ENCODE measurements at regions of chrX and their contacts with region 1.

Region 1: DNA sequence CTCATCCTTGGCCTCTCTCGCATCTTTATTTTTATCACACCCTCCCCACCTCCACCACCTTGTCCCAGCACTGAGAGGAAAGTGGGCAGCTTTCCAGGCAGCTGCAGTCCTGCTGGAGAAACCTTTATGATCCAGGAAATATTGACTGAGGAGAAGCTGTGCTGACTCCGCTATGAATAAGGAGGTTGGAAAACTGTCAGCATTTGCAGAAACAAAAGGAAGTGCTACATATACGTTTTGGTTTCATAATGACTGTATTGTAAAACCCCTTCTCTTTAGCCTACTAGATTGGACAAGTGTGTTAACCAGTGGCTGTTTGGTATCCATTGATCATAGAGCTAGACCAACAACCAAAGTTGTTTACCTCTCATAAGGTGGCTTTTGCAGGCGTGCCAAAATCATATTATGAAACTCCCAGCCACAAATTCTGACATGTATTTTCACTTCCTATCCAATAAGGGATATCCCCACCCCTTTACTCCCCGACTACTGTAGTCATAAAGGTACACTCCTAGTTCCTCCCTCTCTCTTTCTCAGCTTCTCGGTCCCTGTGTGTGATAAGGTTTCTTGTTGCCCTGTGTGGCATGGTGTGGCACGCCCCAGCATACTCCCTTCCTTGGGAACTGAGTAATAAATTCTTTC is 88.4 kb downstream of the GPR143 start:
- DNase-seq: peak; percentile 73
- CTCF ChIP-seq: no peak

Region 2: DNA sequence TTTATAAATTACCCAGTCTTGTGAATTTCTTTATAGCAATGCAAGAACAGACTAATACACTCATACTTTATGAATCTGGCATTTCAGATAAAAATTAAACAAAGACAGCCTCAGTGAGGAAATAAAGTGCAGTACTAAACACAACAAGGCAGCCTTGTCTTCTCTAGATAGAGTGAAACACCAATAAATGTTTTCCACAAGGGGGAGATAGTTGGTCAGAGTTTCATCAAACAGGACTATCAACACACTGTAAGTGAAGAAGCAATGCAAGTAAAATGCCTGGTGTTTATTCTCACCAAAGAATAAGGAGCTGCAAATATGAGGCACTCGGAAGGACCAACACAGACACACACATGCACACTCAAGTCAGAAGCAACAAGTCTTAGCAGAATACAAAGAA is 706.1 kb before region 1 on chrX:
- in situ Hi-C with region 1: loop called (anchors 25 kb)
- DNase-seq: peak; percentile 9
- CTCF ChIP-seq: peak; percentile 23

Region 3: DNA sequence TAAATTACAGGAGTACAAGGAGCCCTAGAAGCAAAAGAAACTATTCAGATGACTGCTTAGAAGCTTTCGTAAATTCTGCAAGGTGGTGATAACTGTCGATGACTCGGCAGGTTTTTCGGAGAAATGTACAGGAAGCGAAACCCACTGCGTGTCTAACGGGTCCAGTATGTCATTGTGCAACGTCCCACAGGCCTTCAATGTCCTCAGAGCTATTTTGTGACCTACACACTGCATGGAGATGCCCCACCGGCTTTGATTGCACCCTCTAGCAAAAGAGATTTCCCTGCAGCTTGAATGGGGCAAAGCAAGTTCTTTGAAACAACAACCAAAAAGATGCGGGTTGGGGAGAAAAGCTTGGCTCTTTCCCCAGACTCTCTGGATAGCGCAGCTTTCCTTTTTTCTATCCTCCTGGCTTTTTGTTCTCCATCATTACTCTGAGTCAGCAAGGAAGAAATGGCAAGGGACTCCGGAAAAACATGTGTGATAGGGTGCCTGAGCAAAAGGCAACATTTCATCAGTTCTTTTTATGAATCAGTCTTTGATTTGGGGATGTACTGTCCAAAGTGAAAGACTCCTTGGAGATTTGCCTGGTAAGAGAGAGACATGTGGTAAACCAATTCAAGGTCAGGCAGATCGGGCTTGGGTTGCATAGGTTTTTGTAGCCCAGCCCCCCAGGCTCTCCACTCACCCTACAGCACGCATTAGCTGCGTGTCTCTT is 324.4 kb before region 1 on chrX:
- in situ Hi-C with region 1: loop called (anchors 25 kb)
- DNase-seq: peak; percentile 53
- CTCF ChIP-seq: no peak

Region 4: GRCh38 chrX:9464435-9465371 is 212.5 kb before region 1 on chrX and contains the start of gene TBL1X:
- in situ Hi-C with region 1: loop called (anchors 25 kb)
- DNase-seq: peak; percentile 74
- CTCF ChIP-seq: no peak

Measured in GM13977 (cell line).